ENCODE measurements at regions of chr6 and their contacts with region 1.

Region 1: DNA sequence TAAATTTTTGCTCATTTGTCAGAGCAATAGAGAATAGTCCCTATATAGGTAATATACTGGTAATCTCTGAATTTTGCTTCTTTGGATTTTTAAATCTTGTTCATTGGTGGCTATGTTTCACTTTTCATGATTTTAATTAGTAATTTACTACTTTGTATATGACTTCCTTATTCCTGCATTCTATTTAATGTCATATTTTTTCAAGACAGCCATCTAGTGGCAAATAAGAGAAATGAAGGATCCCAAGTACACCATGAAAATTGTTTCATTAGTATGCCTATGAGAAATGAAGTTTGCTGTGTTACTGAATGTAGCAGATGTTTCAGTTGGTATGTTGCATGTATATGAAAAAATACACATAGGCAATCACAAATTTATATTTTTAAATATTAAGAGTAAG is 82.4 kb downstream of the ZNF292 start:
- DNase-seq: no peak
- ATAC-seq: peak in 1 of 4 donors; percentile 42
- H3K4me3 ChIP-seq: no peak overlapping the region
- H3K27ac ChIP-seq: no peak overlapping the region
- H3K4me1 ChIP-seq: no peaks in the 10 kb centered on the region
- H3K27me3 ChIP-seq: no peaks in the 10 kb centered on the region
- CTCF ChIP-seq: peak; percentile 44 to 68 (median 62)
- POLR2A ChIP-seq: no peak

Region 2: GRCh38 chr6:86706448-86706847 is 531.4 kb before region 1 on chr6:
- intact Hi-C with region 1: no loop called
- DNase-seq: no peak
- ATAC-seq: peak in 1 of 4 donors; percentile 20
- H3K4me3 ChIP-seq: no peak overlapping the region
- H3K27ac ChIP-seq: no peak overlapping the region
- H3K4me1 ChIP-seq: peaks cover 0 to 2% (median 0%) of the 10 kb centered on the region in 12 donors
- H3K27me3 ChIP-seq: no peaks in the 10 kb centered on the region
- CTCF ChIP-seq: no peak
- POLR2A ChIP-seq: no peak

Region 3: DNA sequence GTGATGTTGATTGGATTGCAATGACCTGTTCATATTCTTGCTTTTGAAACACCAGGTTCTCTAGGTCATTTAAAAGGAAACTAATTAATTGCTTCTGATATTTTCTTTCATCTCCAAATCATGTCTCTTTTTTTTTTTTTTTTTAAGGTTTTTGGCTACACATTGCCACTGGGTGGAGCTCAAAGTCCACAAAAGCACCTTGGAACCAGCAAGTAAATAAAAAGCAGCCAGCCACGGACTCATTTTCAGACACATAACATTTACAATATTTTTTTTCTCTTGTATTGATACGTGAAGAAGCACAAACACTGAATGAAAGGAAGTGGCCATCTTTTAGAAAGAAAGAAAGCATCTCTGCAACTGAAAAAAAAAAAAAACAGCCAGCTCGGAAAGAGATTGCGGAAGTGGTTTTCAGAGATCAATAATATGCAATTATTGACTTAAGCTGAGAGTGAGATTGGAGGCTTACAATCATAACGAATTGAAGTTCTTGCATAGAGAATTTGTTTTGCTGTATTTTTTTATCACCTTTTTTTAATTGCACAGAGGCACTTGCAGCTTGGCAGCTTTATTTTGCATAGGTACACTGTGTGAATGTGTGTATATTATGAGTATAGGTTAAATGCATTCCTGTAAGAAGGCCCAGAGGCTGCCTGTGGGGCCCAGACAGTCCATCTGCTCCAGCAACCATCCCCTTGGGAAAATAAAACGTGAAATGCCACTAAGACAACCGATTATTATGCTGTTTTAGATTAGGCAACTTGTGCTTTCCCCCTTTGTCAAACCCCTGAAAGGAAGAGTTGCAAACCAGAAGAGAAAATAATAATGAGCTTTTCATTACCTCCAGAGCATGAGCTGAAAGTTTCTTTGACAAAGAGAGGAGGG is 171.1 kb before region 1 on chr6:
- intact Hi-C with region 1: loop called in 6 of 10 experiments (anchors 5 to 10 kb)
- DNase-seq: peak in 3 of 5 donors; percentile 22 to 34 (median 24)
- ATAC-seq: no peak
- H3K4me3 ChIP-seq: peak overlapping the region in 1 of 12 donors; percentile 9
- H3K27ac ChIP-seq: no peak overlapping the region
- H3K4me1 ChIP-seq: no peaks in the 10 kb centered on the region
- H3K27me3 ChIP-seq: peaks cover 0 to 17% (median 0%) of the 10 kb centered on the region in 9 donors
- CTCF ChIP-seq: peak; percentile 20 to 64 (median 52)
- POLR2A ChIP-seq: no peak

Region 4: DNA sequence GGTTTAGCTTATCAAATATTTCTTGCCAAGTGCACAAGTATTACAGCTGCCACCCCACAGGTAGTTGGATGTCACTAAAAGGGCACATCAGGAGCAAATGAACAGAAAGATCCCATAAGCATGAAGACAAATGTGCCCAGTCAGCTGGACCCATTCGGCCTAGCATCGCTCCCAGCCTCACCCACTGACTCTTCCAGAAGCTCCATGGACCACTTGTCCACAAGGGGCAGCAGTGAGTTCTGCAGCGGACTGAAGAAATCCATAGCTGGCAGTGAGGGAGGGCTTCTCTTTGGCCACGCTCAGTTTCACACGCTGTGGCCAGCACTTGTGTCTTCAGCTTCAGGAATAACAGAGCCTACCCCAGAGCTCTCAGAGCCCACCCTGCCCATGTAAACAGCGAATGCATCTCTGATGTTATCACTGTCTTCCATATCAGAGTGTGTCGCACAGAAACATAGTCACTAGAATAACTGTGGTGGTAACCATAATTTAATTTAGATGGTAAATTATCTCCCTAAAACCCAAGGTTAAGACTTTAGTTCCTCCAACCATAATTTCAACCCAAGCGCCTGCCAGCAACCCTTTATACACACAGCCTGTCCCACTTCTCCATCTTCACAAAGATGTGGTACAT is 158.7 kb before region 1 on chr6:
- intact Hi-C with region 1: loop called in 3 of 10 experiments (anchors 10 kb)
- DNase-seq: peak; percentile 41 to 70 (median 55)
- ATAC-seq: peak in 3 of 4 donors; percentile 57 to 87 (median 78)
- H3K4me3 ChIP-seq: no peak overlapping the region
- H3K27ac ChIP-seq: no peak overlapping the region
- H3K4me1 ChIP-seq: no peaks in the 10 kb centered on the region
- H3K27me3 ChIP-seq: peaks cover 0 to 3% (median 0%) of the 10 kb centered on the region in 9 donors
- CTCF ChIP-seq: peak; percentile 64 to 91 (median 76)
- POLR2A ChIP-seq: no peak

Region 5: GRCh38 chr6:87102151-87102621 is 135.6 kb before region 1 on chr6:
- intact Hi-C with region 1: no loop called
- DNase-seq: peak in 3 of 5 donors; percentile 22 to 42 (median 30)
- ATAC-seq: peak; percentile 75 to 98 (median 96)
- H3K4me3 ChIP-seq: no peak overlapping the region
- H3K27ac ChIP-seq: peak overlapping the region in 4 of 12 donors; percentile 14 to 33 (median 22)
- H3K4me1 ChIP-seq: peaks cover 0 to 4% (median 0%) of the 10 kb centered on the region in 12 donors
- H3K27me3 ChIP-seq: no peaks in the 10 kb centered on the region
- CTCF ChIP-seq: no peak
- POLR2A ChIP-seq: no peak

Region 6: GRCh38 chr6:87139236-87139635 is 98.6 kb before region 1 on chr6:
- intact Hi-C with region 1: loop called in 8 of 10 experiments (anchors 5 kb)
- DNase-seq: peak in 1 of 5 donors; percentile 16
- ATAC-seq: peak in 3 of 4 donors; percentile 42 to 56 (median 51)
- H3K4me3 ChIP-seq: no peak overlapping the region
- H3K27ac ChIP-seq: no peak overlapping the region
- H3K4me1 ChIP-seq: no peaks in the 10 kb centered on the region
- H3K27me3 ChIP-seq: peaks cover 0 to 10% (median 0%) of the 10 kb centered on the region in 9 donors
- CTCF ChIP-seq: peak; percentile 53 to 77 (median 69)
- POLR2A ChIP-seq: no peak

Measured in heart left ventricle (tissue), 16 donors.